ENCODE measurements at regions of chr17 and their contacts with region 1.

Region 1: DNA sequence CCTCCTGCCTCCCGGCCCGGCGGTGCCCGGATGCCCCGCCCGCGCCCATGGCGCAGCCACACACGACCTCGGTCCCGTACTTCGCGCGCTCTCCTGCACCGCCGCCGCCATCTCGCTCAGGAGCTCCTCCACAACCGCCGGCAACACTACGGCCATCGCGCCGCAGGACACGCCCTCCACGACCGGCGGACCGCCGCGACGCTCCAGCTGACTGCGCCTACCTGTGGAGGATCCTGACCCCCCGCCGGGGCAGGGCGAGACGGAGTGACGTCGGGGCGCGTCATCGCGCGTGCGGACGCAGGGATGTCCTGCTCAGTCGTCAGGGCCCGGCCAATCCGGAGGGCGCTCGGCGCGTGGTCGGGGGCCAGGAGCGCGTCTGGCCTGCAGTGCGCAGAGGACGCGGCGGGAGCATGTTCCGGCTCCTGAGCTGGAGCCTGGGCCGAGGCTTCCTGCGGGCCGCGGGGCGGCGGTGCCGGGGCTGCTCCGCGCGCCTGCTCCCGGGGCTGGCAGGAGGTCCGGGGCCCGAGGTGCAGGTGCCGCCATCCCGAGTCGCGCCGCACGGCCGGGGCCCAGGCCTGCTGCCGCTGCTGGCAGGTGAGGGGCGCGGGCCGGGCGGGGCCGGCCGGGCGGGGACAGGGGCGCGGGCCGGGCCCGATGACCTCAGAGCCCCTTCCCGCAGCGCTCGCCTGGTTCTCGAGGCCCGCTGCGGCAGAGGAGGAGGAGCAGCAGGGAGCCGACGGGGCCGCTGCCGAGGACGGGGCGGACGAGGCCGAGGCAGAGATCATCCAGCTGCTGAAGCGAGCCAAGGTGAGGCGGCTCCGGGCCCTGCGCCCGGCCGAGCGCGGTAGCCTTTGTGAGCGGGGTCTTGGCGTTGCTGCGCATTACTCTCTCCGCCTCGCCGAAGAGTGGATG is at the starts of genes TTC19 and ZSWIM7:
- DNase-seq: peak; percentile 93
- H3K4me3 Mint-ChIP-seq: peak within 1 kb of the TSS; percentile 96
- H3K27ac Mint-ChIP-seq: peak within 1 kb of the TSS; percentile 99
- H3K4me1 Mint-ChIP-seq: peaks cover 35% of the 10 kb centered on the region
- H3K27me3 Mint-ChIP-seq: peaks cover 1% of the 10 kb centered on the region
- total RNA-seq, gene TTC19: 38.0 and 40.3 TPM in 2 replicates
- total RNA-seq, gene ZSWIM7: 8.3 and 9.5 TPM in 2 replicates

Region 2: DNA sequence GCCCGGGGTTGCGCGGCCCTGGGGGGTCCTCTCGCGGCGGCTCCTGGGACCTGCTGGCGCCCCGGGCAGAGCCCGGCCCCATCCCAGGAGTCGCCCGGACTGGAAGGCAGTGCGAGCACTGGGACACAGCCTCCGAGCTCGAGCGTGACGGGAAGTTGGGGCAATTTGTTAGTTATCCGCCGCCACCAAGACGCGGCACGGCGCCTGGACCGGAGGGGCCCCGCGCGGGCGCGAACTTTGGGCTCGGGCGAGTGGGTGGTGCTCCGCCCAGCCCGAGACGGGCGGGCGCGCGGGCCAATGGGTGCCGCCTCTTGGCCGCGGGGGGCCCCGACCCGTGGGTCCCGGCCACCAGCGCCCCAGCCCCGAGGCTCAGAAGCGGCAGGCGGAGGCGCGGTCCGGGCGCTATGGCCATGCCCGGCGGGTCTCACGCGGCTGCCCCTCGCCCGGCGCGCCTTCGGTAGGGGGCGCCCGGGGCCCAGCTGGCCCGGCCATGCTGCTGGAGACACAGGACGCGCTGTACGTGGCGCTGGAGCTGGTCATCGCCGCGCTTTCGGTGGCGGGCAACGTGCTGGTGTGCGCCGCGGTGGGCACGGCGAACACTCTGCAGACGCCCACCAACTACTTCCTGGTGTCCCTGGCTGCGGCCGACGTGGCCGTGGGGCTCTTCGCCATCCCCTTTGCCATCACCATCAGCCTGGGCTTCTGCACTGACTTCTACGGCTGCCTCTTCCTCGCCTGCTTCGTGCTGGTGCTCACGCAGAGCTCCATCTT is 54.8 kb before region 1 on chr17 and contains the start of gene ADORA2B:
- intact Hi-C with region 1: loop called (anchors 1 kb)
- DNase-seq: peak; percentile 12
- H3K4me3 Mint-ChIP-seq: peak within 1 kb of the TSS; percentile 71
- H3K27ac Mint-ChIP-seq: peak within 1 kb of the TSS; percentile 59
- H3K4me1 Mint-ChIP-seq: peaks cover 16% of the 10 kb centered on the region
- H3K27me3 Mint-ChIP-seq: peaks cover 32% of the 10 kb centered on the region
- total RNA-seq, gene ADORA2B: 1.4 and 1.5 TPM in 2 replicates

Region 3: GRCh38 chr17:16178836-16179235 is 179.1 kb after region 1 on chr17:
- intact Hi-C with region 1: no loop called
- DNase-seq: no peak
- H3K4me3 Mint-ChIP-seq: no peak overlapping the region
- H3K27ac Mint-ChIP-seq: no peak overlapping the region
- H3K4me1 Mint-ChIP-seq: peaks cover 7% of the 10 kb centered on the region
- H3K27me3 Mint-ChIP-seq: no peaks in the 10 kb centered on the region